PC-9 (cell line): ENCODE measurements at regions of chr3 and their contacts with region 1.

Region 1: DNA sequence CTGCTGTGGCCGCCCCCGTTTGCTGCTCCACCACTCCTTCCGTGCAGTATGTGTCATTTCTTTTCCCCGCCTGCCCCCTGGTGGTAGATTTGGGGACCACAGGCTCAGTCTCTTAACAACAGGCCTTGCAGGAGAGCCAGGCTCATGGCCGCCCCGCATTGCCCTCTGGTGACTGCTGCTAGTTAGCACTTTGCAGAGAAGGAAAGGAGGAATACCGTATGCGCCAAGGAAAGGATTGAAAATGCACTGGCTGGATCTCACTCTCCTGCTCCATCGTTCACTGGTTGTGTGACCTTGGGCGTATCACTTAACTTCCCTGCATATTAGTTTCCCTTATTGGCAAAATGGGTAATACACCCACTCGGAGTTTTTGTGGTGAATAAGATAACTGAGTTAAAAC is 39.3 kb upstream of the PXYLP1 start:
- DNase-seq: peak; percentile 74 to 97
- H3K4me3 ChIP-seq: no peak overlapping the region
- H3K27ac ChIP-seq: no peak overlapping the region
- H3K4me1 ChIP-seq: no peaks in the 10 kb centered on the region
- H3K27me3 ChIP-seq: peaks cover 59% of the 10 kb centered on the region
- CTCF ChIP-seq: peak; percentile 97

Region 2: DNA sequence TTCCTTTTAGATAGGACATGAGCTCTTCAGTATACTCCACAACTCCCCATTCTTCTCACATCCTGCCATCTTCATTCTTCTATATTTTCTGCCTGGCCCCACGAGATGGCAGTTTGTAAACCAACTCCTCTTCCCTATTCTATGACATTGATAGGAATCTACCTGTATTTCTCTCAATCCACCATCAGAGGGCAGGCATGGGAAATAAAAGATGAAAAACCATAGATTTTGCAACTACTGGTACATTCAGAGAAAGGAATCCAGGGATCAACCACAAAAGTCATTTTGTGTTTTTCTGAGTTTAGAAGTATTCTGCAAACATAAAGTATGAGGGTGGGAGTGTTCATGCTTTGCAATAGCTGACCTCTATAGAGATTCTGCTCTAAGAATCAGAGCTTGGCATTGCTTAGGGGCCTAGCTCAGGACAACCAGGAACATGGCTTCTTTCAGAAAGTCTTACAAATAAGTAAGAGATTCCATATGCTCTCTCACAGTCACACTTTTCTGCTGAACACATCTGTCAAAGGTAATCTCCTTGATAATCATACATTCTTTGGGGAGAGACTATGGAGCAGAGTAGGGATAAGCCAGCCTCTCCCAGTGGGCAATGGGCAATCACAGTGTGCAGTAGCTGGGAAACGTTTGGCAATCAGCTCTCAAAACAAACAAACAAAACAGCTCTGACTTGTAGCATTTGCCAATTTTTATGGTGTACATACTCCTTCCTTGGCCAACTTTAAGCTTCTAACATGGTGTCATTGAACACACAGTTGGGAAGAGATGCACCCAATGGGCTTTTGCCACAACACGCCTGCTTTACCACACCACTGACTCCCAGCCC is 293.8 kb before region 1 on chr3:
- CTCF ChIA-PET with region 1: no interaction called
- POLR2A ChIA-PET with region 1: no interaction called
- intact Hi-C with region 1: loop called (anchors 1 kb)
- DNase-seq: peak; percentile 16 to 66
- H3K4me3 ChIP-seq: no peak overlapping the region
- H3K27ac ChIP-seq: no peak overlapping the region
- H3K4me1 ChIP-seq: no peaks in the 10 kb centered on the region; the same call in 1 of the 2 replicates
- H3K27me3 ChIP-seq: no peaks in the 10 kb centered on the region
- CTCF ChIP-seq: peak; percentile 79

Region 3: GRCh38 chr3:141011232-141011996 is 180.9 kb before region 1 on chr3:
- CTCF ChIA-PET with region 1: no interaction called
- POLR2A ChIA-PET with region 1: no interaction called
- intact Hi-C with region 1: loop called (anchors 1 kb)
- DNase-seq: peak in 1 of 2 experiments; percentile 58
- H3K4me3 ChIP-seq: no peak overlapping the region
- H3K27ac ChIP-seq: no peak overlapping the region
- H3K4me1 ChIP-seq: no peaks in the 10 kb centered on the region
- H3K27me3 ChIP-seq: no peaks in the 10 kb centered on the region
- CTCF ChIP-seq: peak; percentile 74

Region 4: DNA sequence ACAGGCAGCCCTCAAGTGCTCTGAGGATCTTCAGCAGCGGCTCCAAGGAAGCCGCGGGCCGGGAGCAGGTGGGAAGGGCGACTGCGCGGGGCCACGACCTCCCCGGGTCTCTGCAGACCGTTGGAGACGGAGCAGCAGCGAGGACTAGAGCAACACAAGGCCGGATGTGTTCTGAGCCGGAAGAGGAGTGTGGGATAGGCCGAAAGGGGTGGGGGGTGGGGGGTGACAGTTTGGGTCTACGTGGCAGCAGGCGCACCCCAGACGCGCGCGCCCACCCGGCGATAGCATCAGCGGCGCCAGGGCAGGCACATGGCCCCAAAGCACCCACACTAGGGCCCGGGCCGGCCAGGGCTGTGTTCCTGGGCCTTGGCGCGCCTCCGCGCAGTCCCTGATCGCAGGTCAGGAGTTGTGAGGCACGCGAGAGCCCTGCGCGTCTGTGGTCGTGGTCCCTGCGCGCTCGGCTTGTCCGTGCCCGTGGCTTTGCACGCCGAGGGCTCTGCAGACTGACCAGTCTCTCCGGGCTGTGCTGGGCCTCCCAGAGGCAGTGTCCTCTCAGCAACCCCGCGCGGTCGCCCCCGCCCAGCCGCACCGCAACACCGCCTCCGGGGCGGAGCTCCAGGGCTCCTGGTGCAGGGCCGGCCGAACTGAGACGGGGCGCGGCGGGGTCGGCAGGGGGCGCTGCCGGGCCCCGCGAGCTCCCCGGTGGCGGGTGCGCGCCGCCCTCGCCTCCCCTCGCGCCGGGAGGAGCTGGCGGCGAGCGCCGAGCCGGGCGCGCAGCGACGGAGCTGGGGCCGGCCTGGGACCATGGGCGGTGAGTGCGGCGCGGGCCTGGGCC is 39.0 kb after region 1 on chr3 and contains the start of gene PXYLP1:
- CTCF ChIA-PET with region 1: no interaction called
- POLR2A ChIA-PET with region 1: no interaction called
- intact Hi-C with region 1: no loop called
- DNase-seq: peak; percentile 71 to 98
- H3K4me3 ChIP-seq: peak within 1 kb of the TSS; percentile 88
- H3K27ac ChIP-seq: peak within 1 kb of the TSS; percentile 58
- H3K4me1 ChIP-seq: peaks cover 13% of the 10 kb centered on the region
- H3K27me3 ChIP-seq: no peaks in the 10 kb centered on the region
- CTCF ChIP-seq: peak; percentile 51; the same call in 1 of the 2 replicates
- total RNA-seq, gene PXYLP1: 7.8 and 11.1 TPM in 2 replicates

Region 5: GRCh38 chr3:141250342-141250741 is 58.0 kb after region 1 on chr3:
- CTCF ChIA-PET with region 1: no interaction called
- POLR2A ChIA-PET with region 1: no interaction called
- intact Hi-C with region 1: no loop called
- DNase-seq: no peak
- H3K4me3 ChIP-seq: no peak overlapping the region
- H3K27ac ChIP-seq: no peak overlapping the region
- H3K4me1 ChIP-seq: no peaks in the 10 kb centered on the region
- H3K27me3 ChIP-seq: no peaks in the 10 kb centered on the region
- CTCF ChIP-seq: no peak

Region 6: DNA sequence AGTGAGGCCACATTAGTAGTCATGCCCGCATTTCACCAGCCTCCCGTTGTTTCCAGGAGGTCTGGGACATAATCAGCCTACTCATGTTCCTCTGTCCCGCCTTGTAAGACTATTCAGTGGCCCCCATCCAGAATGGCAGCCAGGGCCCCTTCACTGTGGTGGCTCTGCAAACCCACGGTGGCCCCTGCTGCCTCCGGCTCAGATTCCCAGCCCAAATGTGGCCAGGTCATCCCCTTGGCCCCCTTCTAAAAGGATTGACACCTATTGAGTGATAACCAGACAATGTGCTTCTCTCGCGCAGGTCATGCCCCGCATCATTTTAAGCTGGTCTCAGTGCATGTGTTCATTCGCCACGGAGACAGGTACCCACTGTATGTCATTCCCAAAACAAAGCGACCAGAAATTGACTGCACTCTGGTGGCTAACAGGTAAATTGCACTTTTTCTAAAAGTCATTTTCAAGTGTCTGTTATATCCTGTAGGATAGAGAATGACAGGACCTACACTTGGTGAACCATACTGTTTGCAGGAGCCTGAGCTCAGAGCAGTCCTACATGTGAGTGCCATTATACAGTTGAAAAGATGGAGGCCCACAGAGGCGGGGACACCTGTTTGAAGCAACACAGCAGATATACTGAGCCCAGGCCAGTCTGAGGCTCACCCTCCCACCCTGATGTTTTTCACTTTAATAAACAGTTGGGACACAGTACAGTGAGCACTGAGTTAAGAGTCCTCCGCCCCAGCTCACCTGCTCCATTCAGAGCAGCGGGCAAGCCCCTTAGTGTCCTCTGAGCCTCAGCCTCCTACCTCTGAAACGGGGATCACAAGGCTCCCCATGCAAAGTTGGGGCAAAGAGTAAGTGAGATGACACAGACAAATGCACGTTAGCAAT is 87.0 kb after region 1 on chr3:
- CTCF ChIA-PET with region 1: no interaction called
- POLR2A ChIA-PET with region 1: no interaction called
- intact Hi-C with region 1: loop called (anchors 2 kb)
- DNase-seq: no peak
- H3K4me3 ChIP-seq: no peak overlapping the region
- H3K27ac ChIP-seq: no peak overlapping the region
- H3K4me1 ChIP-seq: peaks cover 44% of the 10 kb centered on the region
- H3K27me3 ChIP-seq: no peaks in the 10 kb centered on the region
- CTCF ChIP-seq: peak; percentile 77